HCT116 (cell line): ENCODE measurements at regions of chr1 and their contacts with region 1.

Region 1: GRCh38 chr1:46340404-46341221 is at the start of gene NSUN4:
- DNase-seq: peak; percentile 94
- ATAC-seq: peak; percentile 90
- H3K4me3 ChIP-seq: peak within 1 kb of the TSS; percentile 75 to 83
- H3K27ac ChIP-seq: peak within 1 kb of the TSS; percentile 97
- H3K4me1 ChIP-seq: peaks cover 18 to 35% of the 10 kb centered on the region in 2 experiments
- H3K27me3 ChIP-seq: no peaks in the 10 kb centered on the region
- CTCF ChIP-seq: peak; percentile 43 to 72 (median 67); a peak in 5 of 6 replicates
- POLR2A ChIP-seq: peak; percentile 91
- RAD21 ChIP-seq: no peak; the same call in 1 of the 2 replicates
- total RNA-seq, gene NSUN4: 27.8 TPM

Region 2: DNA sequence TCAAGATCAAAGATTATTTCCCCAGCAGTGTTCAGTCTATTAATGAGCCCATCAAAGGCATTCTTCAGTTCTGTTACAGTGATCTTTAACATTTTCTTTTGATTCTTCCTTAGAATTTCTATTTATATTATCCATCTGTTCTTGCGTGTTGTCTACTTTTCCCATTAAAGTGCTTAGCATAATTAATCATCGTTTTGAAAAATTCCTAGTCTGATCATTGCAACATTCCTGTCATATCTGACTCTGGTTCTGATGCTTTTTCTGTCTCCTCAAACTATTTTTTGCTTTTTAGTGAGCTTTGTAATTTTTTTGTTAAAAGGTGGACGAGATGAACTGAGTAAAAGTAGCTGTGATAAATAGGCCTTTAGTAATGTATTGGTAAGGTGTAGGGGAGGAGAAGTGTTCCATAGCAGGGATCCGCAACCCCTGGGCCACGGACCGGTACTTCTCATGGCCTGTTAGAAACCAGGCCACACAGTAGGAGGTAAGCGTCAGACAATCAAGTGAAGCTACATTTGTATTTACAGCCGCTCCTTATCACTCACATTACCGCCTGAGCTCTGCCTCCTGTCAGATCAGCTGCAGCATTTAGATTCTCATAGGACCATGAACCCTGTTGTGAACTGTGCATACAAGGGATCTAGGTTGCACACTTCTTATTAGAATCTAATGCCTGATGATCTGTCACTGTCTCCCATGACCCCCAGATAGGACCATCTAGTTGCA is 371.5 kb before region 1 on chr1:
- CTCF ChIA-PET with region 1: no interaction called
- POLR2A ChIA-PET with region 1: no interaction called
- RAD21 ChIA-PET with region 1: no interaction called
- intact Hi-C with region 1: no loop called
- DNase-seq: no peak
- ATAC-seq: no peak
- H3K4me3 ChIP-seq: no peak overlapping the region
- H3K27ac ChIP-seq: no peak overlapping the region
- H3K4me1 ChIP-seq: no peaks in the 10 kb centered on the region; a peak in 1 of 4 replicates
- H3K27me3 ChIP-seq: no peaks in the 10 kb centered on the region
- CTCF ChIP-seq: no peak
- POLR2A ChIP-seq: no peak
- RAD21 ChIP-seq: no peak

Region 3: GRCh38 chr1:46036894-46037839 is 303.4 kb before region 1 on chr1:
- CTCF ChIA-PET with region 1: no interaction called
- POLR2A ChIA-PET with region 1: no interaction called
- RAD21 ChIA-PET with region 1: no interaction called
- intact Hi-C with region 1: loop called (anchors 5 kb)
- DNase-seq: peak; percentile 63
- ATAC-seq: peak; percentile 85
- H3K4me3 ChIP-seq: no peak overlapping the region
- H3K27ac ChIP-seq: no peak overlapping the region
- H3K4me1 ChIP-seq: peaks cover 7 to 11% of the 10 kb centered on the region in 2 experiments; a peak in 3 of 4 replicates
- H3K27me3 ChIP-seq: no peaks in the 10 kb centered on the region
- CTCF ChIP-seq: peak; percentile 96 to 98 (median 96)
- POLR2A ChIP-seq: no peak
- RAD21 ChIP-seq: peak; percentile 100

Region 4: GRCh38 chr1:46247436-46248121 is 93.0 kb before region 1 on chr1 and contains the start of gene RAD54L:
- CTCF ChIA-PET with region 1: interaction called, 4 read pairs
- POLR2A ChIA-PET with region 1: interaction called, 11 read pairs
- RAD21 ChIA-PET with region 1: no interaction called
- intact Hi-C with region 1: no loop called
- DNase-seq: peak; percentile 98
- ATAC-seq: peak; percentile 90
- H3K4me3 ChIP-seq: peak within 1 kb of the TSS; percentile 55 to 73
- H3K27ac ChIP-seq: peak within 1 kb of the TSS; percentile 78
- H3K4me1 ChIP-seq: peaks cover 16 to 31% of the 10 kb centered on the region in 2 experiments
- H3K27me3 ChIP-seq: no peaks in the 10 kb centered on the region
- CTCF ChIP-seq: no peak
- POLR2A ChIP-seq: peak; percentile 41
- RAD21 ChIP-seq: no peak
- total RNA-seq, gene RAD54L: 28.9 TPM

Region 5: DNA sequence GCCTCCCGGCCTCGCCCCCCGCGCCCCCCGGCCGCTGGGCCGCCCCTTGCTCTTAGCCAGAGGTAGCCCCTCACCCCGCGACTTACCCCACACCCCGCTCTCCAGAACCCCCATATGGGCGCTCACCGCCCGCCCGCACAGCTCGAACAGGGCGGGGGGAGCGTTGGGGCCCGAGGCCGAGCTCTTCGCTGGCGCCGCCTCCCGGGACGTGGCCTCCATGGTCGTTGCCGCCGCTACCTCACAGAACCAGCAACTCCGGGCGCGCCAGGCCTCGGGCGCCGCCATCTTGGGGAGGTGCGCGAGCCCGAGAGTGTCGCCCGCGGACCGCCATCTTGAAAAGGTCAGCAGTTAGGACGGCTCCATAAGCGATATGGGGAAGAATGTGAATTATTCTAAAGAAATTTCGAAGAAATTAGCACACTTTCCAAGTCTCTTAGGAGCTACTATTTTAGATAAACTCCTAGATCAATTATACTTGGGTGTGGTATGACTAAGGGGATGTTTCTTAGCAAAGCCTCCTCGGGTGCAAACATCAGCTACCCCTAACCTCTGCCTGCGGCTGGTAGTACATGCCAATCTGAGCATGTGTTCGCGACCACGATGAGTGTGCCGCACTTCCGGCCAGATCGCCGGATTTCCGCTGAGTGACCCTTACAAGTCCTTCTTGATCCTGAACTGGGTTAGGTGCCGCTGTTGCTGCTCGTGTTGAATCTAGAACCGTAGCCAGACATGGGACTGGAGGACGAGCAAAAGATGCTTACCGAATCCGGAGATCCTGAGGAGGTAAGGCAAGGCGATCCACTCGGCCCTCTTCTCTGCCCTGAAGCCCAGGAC is 37.4 kb before region 1 on chr1 and contains the starts of genes LRRC41 and UQCRH:
- CTCF ChIA-PET with region 1: no interaction called
- POLR2A ChIA-PET with region 1: interaction called, 3 read pairs
- RAD21 ChIA-PET with region 1: interaction called in 1 of 2 experiments, 8 read pairs
- intact Hi-C with region 1: loop called (anchors 2 kb)
- DNase-seq: peak; percentile 97
- ATAC-seq: peak; percentile 82
- H3K4me3 ChIP-seq: peak within 1 kb of the TSS; percentile 81 to 92
- H3K27ac ChIP-seq: peak within 1 kb of the TSS; percentile 94
- H3K4me1 ChIP-seq: peaks cover 7 to 19% of the 10 kb centered on the region in 2 experiments; a peak in 3 of 4 replicates
- H3K27me3 ChIP-seq: no peaks in the 10 kb centered on the region
- CTCF ChIP-seq: 0 out of 6 replicates have a peak, but pooled peaks of 1 of the 3 experiments have one; percentile 6
- POLR2A ChIP-seq: peak; percentile 78
- RAD21 ChIP-seq: no peak
- total RNA-seq, gene LRRC41: 38.1 TPM
- total RNA-seq, gene UQCRH: 514 TPM

Region 6: DNA sequence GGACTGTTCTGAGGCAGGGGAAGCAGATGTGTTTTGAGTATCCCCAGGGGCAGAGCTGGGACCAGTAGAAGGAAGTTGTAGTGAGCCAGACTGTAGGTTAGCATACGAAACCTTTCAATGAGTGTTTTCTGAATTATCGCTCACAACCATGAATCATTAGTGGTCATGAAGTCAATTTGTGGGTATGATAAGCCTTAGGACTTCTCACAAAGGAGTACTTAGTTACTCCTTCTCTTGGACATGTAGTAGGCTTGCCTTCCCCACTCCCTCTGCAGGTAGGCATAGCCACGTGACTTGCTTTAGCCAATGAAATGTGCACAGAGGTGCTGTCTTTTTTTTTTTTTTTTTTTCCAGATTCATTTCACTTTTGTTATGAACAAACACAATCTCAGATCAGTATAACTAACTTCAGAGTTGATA is 29.6 kb after region 1 on chr1:
- CTCF ChIA-PET with region 1: no interaction called
- POLR2A ChIA-PET with region 1: no interaction called
- RAD21 ChIA-PET with region 1: no interaction called
- intact Hi-C with region 1: no loop called
- DNase-seq: no peak
- ATAC-seq: peak; percentile 51
- H3K4me3 ChIP-seq: no peak overlapping the region
- H3K27ac ChIP-seq: peak overlapping the region; percentile 17; the same call in 1 of the 2 replicates
- H3K4me1 ChIP-seq: no peaks in the 10 kb centered on the region
- H3K27me3 ChIP-seq: no peaks in the 10 kb centered on the region
- CTCF ChIP-seq: no peak
- POLR2A ChIP-seq: no peak
- RAD21 ChIP-seq: no peak

Region 7: DNA sequence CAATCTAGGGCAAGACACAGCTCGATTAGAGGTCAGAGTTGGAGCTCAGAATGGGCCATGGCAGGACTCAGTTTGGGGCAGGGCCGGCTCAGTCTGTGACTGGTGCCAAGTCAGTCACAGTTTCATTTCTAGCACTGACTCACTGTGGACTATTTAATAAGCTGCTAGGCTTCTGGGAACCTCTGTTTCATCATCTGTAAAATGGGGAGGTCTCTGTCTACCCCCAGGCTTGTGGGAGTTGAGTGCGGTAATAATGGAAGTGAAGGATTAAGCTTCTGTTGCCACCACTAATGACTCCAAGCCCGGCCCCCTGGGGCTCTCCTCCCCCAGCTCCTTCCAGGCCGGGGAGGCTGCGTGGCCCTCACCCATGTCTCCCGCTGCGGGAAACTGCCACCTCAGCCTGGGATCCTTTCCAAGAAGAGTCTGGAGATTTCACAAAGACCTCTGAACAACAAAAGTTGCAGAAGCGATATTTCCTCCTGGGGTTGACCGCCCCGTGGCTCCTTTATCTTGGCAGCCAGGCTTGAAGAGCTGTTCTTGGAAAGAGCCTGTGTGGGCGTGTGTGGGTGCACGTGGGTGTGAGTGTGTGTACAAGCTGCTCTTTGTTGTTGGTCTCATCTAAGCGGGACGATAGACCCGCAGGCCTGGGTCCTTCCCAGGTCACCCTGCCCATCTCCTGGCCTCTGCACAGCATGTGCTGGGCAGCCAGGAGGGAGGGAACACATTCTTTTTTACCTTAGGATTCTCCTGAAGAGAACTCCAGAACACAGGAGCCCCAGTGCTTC is 181.8 kb after region 1 on chr1:
- CTCF ChIA-PET with region 1: no interaction called
- POLR2A ChIA-PET with region 1: no interaction called
- RAD21 ChIA-PET with region 1: no interaction called
- intact Hi-C with region 1: no loop called
- DNase-seq: no peak
- ATAC-seq: no peak
- H3K4me3 ChIP-seq: no peak overlapping the region
- H3K27ac ChIP-seq: no peak overlapping the region; the same call in 1 of the 2 replicates
- H3K4me1 ChIP-seq: peaks cover 47 to 51% of the 10 kb centered on the region in 2 experiments
- H3K27me3 ChIP-seq: no peaks in the 10 kb centered on the region
- CTCF ChIP-seq: no peak
- POLR2A ChIP-seq: no peak
- RAD21 ChIP-seq: no peak